ENCODE measurements at regions of chr14 and their contacts with region 1.

Region 1: DNA sequence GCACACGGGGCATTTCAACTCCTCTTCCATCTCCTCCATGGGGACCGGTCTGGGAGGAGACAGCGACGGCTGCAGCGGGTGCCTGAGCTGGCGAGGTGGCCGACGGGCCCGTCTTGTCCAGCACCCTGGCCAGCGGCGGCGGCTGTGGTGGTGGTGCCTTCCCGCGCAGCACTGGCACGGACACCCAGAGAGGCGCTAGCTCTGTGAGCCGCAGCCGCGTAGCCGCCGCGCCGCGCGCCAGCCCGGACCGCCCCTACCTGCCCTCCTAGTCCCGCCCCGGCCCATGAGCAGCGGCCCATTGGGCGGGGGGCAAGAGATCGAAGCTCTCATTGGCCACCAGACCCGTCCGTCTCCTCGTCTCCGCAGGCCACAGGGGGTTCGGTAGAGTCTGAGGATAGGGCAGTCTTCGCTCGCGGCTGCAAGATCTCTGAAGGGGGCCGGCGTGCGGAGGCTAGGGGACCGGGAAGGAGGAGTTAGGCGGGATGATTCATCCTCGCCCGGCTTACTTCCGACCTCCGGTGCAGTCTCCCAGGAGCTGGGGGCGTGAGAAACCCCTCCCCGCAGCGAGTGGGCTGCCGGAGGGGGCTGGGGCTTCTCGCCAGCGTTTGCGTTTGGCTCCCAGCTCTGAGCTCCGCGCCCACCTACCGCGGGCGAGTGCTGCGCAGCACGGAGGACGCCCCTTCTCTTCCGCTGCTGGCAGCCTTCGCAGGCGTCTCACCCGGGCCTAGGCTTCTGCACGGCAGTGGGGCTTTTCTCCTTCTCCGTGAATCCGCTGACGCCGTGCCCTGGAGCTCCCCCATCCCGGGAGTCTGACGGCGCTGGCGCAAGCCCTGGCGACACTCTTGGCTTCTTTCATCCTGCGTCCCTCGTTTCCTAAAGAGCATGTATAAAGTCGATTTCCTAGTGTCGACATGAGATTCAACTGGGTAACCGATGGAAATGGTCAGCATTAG is at the start of gene TRIM9:
- DNase-seq: peak; percentile 92 to 97
- ATAC-seq: peak; percentile 97 to 99 (median 98)
- H3K4me3 ChIP-seq: peak within 1 kb of the TSS; percentile 75
- H3K27ac ChIP-seq: peak within 1 kb of the TSS; percentile 10
- H3K4me1 ChIP-seq: peaks cover 12% of the 10 kb centered on the region
- H3K27me3 ChIP-seq: peaks cover 0 to 24% (median 12%) of the 10 kb centered on the region in 3 donors
- CTCF ChIP-seq: no peak
- total RNA-seq, gene TRIM9: 0.69 to 1.5 (median 1.2) TPM

Region 2: DNA sequence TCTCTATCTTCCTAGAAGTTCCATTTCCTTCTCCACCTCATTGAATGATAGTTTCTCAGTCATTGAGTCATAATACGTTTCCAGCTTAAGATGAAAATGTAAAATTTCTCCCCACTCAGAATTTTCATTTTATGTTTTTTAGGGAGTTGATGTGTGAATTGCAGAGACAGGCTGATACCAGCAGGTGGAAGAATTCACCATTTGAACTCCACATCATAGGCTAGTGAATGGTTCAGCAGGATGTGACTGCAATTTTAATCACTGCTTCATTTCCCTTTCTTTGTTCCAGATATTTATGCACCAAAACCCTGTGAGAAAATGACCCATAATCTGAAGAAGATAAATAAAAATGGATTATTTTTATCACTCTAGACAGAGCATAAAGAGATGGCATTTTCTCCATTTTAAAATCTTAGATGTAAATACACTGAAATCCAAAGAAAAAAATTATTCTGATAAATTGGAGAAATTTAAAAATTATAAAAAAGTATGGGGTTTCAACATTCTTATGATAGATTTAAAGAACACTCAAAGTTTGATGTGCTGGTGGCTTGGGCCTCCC is 140.3 kb before region 1 on chr14:
- intact Hi-C with region 1: loop called (anchors 5 to 10 kb)
- DNase-seq: no peak
- ATAC-seq: peak; percentile 69 to 93 (median 82)
- H3K4me3 ChIP-seq: no peak overlapping the region
- H3K27ac ChIP-seq: peak overlapping the region; percentile 62
- H3K4me1 ChIP-seq: peaks cover 8% of the 10 kb centered on the region
- H3K27me3 ChIP-seq: no peaks in the 10 kb centered on the region
- CTCF ChIP-seq: peak; percentile 74

Region 3: DNA sequence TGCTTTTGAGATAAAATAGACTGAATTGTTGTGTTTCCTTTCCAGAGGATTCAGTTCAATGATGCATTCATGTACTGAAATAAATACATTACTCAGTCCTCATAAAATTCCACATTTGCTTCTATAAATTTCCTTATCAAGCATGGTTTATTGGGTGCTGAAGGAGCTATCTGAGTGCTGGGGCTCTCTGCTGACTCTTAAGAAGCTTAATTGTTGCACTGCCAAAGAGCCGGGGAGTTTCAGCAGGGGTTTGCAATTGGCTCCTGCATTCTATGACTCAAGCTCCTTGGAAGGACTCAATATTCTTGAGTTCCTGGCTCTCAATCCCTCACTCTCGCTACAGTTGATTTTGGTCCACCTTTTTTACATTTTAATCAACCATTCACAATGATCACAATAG is 81.1 kb before region 1 on chr14:
- intact Hi-C with region 1: loop called in 1 of 2 experiments (anchors 5 kb)
- DNase-seq: peak in 1 of 2 donors; percentile 30
- ATAC-seq: peak; percentile 69 to 94 (median 80)
- H3K4me3 ChIP-seq: no peak overlapping the region
- H3K27ac ChIP-seq: no peak overlapping the region
- H3K4me1 ChIP-seq: peaks cover 6% of the 10 kb centered on the region
- H3K27me3 ChIP-seq: no peaks in the 10 kb centered on the region
- CTCF ChIP-seq: no peak

Region 4: DNA sequence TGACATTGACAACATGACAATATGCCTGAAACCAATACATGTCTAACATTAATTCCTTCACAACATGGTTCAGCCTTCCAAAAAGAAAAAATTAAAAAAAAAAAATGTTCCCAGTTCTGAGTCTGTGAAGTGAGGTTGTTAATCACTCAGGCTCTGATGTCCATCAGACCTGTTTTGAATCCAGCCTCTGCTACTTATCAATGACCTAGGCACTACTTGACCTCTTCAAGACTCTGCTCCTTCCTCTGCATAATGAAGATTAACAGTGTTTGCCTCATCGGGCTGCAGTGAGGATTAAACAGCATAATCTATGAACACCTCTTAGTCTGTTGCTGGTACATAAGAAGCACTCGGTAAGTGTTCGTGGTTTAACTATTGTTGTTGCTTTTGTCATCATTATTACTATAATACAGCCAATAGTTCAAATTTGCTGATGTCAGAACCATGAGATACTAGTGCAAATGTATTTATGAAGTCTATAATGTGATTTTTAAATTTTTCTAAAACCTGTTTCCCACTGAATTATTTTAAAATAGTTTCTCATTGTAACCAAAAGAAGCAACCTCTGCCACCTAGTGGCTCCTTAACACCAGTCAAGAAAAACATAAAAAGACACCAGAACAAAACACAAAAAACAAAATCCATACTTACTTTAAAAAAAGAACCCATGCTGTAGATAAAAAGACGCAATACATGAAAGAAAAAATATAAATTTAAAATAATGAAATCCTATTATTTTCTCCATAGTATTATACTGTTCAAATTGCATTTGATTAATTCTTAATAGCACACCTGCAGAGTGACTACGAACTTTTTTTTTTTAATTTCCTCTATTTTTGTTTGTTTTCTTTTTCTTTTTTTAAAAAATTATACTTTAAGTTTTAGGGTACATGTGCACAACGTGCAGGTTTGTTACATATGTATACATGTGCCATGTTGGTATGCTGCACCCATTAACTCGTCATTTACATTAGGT is 124.6 kb after region 1 on chr14:
- intact Hi-C with region 1: loop called in 1 of 2 experiments (anchors 5 kb)
- DNase-seq: no peak
- ATAC-seq: peak in 1 of 4 donors; percentile 56
- H3K4me3 ChIP-seq: no peak overlapping the region
- H3K27ac ChIP-seq: no peak overlapping the region
- H3K4me1 ChIP-seq: no peaks in the 10 kb centered on the region
- H3K27me3 ChIP-seq: no peaks in the 10 kb centered on the region
- CTCF ChIP-seq: peak; percentile 64

Measured in psoas muscle (tissue), 8 donors.